Activated T-helper 2 cell treated with anti-CD3 and anti-CD28 coated beads, Interferon-gamma antibody, Interleukin-2, Interleukin-4, amounts not matched to agents 10 μg/mL and 5 μg/mL and 100 μg/mL, durations not matched to agents 14 hours and 24 hours and 36 hours (primary cell): ENCODE measurements at regions of chr1 and their contacts with region 1.

Region 1: DNA sequence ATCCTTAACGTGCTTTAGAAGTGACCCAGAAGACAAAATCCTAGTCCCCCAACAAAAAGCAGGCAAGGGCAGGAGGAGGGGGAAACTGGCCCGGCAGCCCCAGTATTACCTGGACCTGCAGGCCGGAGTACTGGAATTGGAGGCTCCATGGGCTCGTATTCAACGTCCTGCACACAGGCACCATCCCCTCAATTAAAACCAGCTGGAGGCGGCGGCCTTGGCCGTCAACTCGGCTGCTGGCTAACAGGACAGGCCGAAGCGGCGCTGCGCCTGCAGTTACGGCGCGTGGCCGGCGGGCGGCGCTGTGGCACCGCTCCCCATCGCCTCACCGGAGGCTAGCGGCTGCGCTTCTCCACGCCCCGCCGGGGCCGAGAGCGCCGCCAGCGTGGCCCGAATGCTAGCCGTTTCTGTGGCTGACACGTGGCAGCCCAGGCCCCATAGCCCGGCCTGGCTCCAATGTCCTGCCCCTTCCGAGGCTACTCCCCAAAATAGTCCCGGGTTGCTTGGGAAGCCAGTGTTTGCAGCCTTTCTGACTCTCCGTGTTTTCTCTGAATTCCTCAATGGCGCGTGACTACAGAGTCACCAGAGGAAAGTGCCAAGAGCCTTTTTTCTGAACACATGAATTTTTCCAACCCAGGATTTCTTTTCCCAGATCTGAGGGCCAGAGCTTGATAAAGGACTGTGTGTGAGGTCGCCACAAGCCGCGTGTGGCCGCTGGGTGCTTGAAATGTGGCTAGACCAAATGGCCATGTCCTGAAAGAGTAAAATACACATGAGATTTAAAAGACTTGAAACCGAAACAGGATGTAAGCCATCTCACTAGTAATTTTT is 82.5 kb downstream of the HHIPL2 start:
- DNase-seq: peak; percentile 75
- H3K4me3 Mint-ChIP-seq: peak overlapping the region; percentile 65
- H3K27ac Mint-ChIP-seq: peak overlapping the region; percentile 88
- H3K4me1 Mint-ChIP-seq: peaks cover 10% of the 10 kb centered on the region
- H3K27me3 Mint-ChIP-seq: peaks cover 16% of the 10 kb centered on the region

Region 2: GRCh38 chr1:222617367-222617951 is 152.0 kb after region 1 on chr1:
- intact Hi-C with region 1: loop called (anchors 1 kb)
- DNase-seq: peak; percentile 89
- H3K4me3 Mint-ChIP-seq: peak overlapping the region; percentile 80
- H3K27ac Mint-ChIP-seq: peak overlapping the region; percentile 75
- H3K4me1 Mint-ChIP-seq: peaks cover 25% of the 10 kb centered on the region
- H3K27me3 Mint-ChIP-seq: peaks cover 36% of the 10 kb centered on the region

Region 3: DNA sequence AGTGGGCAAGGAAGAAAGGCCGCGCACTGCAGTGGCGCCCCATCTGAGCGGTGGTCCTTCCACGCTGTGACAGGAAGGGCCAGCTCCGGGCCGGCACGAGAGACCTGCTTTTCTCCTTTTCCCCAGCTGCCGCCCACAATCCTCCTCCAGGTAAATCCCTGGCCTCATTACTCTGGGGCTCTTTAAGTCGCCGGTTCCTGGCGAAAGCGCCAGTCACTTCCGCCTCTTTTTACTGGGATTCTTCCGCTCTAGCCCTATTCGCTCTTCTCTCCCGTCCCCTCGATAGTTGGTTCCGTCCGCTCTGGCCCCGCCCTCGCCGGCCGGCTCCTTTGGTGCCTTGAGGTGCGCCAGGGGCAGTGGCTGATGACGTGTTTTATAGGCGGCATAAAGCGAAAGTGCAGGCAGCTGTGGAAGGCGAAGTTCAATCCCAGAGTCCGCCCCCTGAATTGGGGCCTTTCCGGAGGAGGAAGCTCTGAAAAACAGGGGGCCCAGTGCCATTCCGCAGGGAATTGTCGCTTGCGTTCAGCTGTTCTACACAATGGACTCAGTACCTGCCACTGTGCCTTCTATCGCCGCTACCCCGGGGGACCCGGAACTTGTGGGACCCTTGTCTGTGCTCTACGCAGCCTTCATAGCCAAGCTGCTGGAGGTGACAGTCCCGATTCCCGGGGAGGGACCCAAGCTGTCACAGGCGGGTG is 178.7 kb after region 1 on chr1:
- intact Hi-C with region 1: loop called (anchors 2 kb)
- DNase-seq: peak; percentile 97
- H3K4me3 Mint-ChIP-seq: peak overlapping the region; percentile 99
- H3K27ac Mint-ChIP-seq: peak overlapping the region; percentile 94
- H3K4me1 Mint-ChIP-seq: peaks cover 18% of the 10 kb centered on the region
- H3K27me3 Mint-ChIP-seq: no peaks in the 10 kb centered on the region

Region 4: GRCh38 chr1:222814536-222815439 is 349.4 kb after region 1 on chr1 and contains the start of gene DISP1:
- intact Hi-C with region 1: loop called (anchors 10 kb)
- DNase-seq: peak; percentile 63
- H3K4me3 Mint-ChIP-seq: peak within 1 kb of the TSS; percentile 88
- H3K27ac Mint-ChIP-seq: peak within 1 kb of the TSS; percentile 78
- H3K4me1 Mint-ChIP-seq: peaks cover 19% of the 10 kb centered on the region
- H3K27me3 Mint-ChIP-seq: peaks cover 10% of the 10 kb centered on the region
- total RNA-seq, gene DISP1: 1.7 and 2.0 TPM in 2 replicates